ENCODE measurements at regions of chr4 and their contacts with region 1.

Region 1: DNA sequence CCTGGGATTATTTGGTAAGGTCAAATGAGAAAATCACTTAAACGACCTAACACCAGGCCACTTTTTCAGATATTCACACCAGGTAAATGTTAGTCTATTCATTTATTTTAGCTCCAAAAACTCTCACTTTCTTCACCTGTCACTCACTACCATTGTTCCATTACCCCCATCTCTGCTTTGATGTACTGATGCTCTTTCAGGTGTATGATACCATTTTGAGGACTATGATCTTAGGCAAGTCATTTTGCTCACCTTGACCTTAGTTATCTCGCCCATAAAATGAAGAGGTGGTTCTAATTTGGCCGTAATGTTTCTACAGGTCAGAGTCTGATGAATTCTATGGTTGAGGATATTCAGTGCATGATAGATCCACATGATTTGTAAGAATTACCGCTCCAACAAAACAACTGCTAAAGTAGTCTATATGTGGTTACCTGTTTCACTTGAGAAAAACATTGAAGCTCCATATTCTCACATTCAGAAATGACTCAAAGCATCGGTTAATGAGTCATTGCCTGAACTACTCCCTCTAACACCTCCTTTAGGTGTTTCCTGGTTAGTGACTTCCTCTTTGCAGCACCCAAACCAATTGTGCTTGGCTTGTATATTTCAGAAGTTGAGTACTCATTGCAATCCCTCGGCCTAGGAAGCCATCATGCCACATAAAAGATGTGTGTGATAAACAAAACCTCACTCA is 4.5 kb downstream of the DTHD1 start:
- DNase-seq: peak; percentile 77
- ATAC-seq: peak; percentile 93
- H3K4me3 Mint-ChIP-seq: peak overlapping the region; percentile 48
- H3K27ac Mint-ChIP-seq: peak overlapping the region; percentile 90
- H3K4me1 Mint-ChIP-seq: peaks cover 52% of the 10 kb centered on the region
- H3K27me3 Mint-ChIP-seq: no peaks in the 10 kb centered on the region
- CTCF ChIP-seq: no peak

Region 2: GRCh38 chr4:36325499-36325898 is 39.6 kb after region 1 on chr4:
- CTCF ChIA-PET with region 1: interaction called, 3 read pairs
- POLR2A ChIA-PET with region 1: interaction called, 7 read pairs
- intact Hi-C with region 1: loop called (anchors 1 kb)
- DNase-seq: no peak
- ATAC-seq: peak; percentile 51
- H3K4me3 Mint-ChIP-seq: peak overlapping the region; percentile 5
- H3K27ac Mint-ChIP-seq: peak overlapping the region; percentile 74
- H3K4me1 Mint-ChIP-seq: peaks cover 62% of the 10 kb centered on the region
- H3K27me3 Mint-ChIP-seq: no peaks in the 10 kb centered on the region
- CTCF ChIP-seq: no peak

Region 3: GRCh38 chr4:37653601-37654000 is 1367.7 kb after region 1 on chr4:
- CTCF ChIA-PET with region 1: no interaction called
- POLR2A ChIA-PET with region 1: no interaction called
- intact Hi-C with region 1: loop called (anchors 5 kb)
- DNase-seq: no peak
- ATAC-seq: no peak
- H3K4me3 Mint-ChIP-seq: no peak overlapping the region
- H3K27ac Mint-ChIP-seq: no peak overlapping the region
- H3K4me1 Mint-ChIP-seq: peaks cover 21% of the 10 kb centered on the region
- H3K27me3 Mint-ChIP-seq: no peaks in the 10 kb centered on the region
- CTCF ChIP-seq: no peak

Measured in activated CD8-positive, alpha-beta T cell treated with anti-CD3 and anti-CD28 coated beads for 36 hours (primary cell).